Caco-2 (cell line): ENCODE measurements at regions of chr20 and their contacts with region 1.

Region 1: GRCh38 chr20:31723319-31724078 is 831 bp upstream of the BCL2L1 start:
- DNase-seq: peak; percentile 100
- H3K4me3 ChIP-seq: peak overlapping the region; percentile 75
- H3K4me3 Mint-ChIP-seq: peak overlapping the region; percentile 96
- H3K27ac Mint-ChIP-seq: peak overlapping the region; percentile 97
- H3K4me1 ChIP-seq: peaks cover 12% of the 10 kb centered on the region
- H3K4me1 Mint-ChIP-seq: peaks cover 19% of the 10 kb centered on the region
- H3K27me3 ChIP-seq: no peaks in the 10 kb centered on the region
- H3K27me3 Mint-ChIP-seq: no peaks in the 10 kb centered on the region
- CTCF ChIP-seq: peak; percentile 99 to 100

Region 2: DNA sequence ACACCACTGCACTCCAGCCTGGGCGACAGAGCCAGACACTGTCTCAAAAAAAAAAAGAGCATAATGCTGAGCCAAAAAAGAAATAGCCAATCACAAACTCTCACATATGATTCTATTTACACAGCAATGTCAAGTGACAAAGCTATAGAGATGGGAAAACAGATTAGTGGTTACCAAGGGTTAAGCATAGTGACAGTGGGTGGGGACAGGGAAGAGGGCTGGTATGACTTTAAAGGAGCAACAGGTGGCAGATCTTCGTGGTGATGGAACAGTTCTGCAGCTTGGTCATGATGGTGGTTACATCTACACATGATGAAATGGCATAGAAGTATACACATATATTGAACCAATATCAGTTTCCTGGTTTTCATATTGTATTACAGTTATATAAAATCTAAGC is 341.7 kb before region 1 on chr20:
- CTCF ChIA-PET with region 1: no interaction called
- POLR2A ChIA-PET with region 1: no interaction called
- intact Hi-C with region 1: no loop called
- DNase-seq: no peak
- H3K4me3 ChIP-seq: no peak overlapping the region
- H3K4me3 Mint-ChIP-seq: no peak overlapping the region
- H3K27ac Mint-ChIP-seq: no peak overlapping the region
- H3K4me1 ChIP-seq: no peaks in the 10 kb centered on the region
- H3K4me1 Mint-ChIP-seq: no peaks in the 10 kb centered on the region
- H3K27me3 ChIP-seq: peaks cover 2% of the 10 kb centered on the region; the same call in 1 of the 2 replicates
- H3K27me3 Mint-ChIP-seq: peaks cover 23% of the 10 kb centered on the region
- CTCF ChIP-seq: no peak

Region 3: GRCh38 chr20:31572701-31573554 is 150.6 kb before region 1 on chr20:
- CTCF ChIA-PET with region 1: interaction called, 22 read pairs
- POLR2A ChIA-PET with region 1: interaction called, 21 read pairs
- intact Hi-C with region 1: loop called (anchors 1 kb)
- DNase-seq: peak; percentile 100
- H3K4me3 ChIP-seq: peak overlapping the region; percentile 56
- H3K4me3 Mint-ChIP-seq: peak overlapping the region; percentile 87
- H3K27ac Mint-ChIP-seq: peak overlapping the region; percentile 98
- H3K4me1 ChIP-seq: peaks cover 24% of the 10 kb centered on the region
- H3K4me1 Mint-ChIP-seq: peaks cover 37% of the 10 kb centered on the region
- H3K27me3 ChIP-seq: no peaks in the 10 kb centered on the region
- H3K27me3 Mint-ChIP-seq: no peaks in the 10 kb centered on the region
- CTCF ChIP-seq: peak in 1 of 2 experiments; percentile 16

Region 4: GRCh38 chr20:31644701-31645100 is 78.8 kb before region 1 on chr20:
- CTCF ChIA-PET with region 1: interaction called, 13 read pairs
- POLR2A ChIA-PET with region 1: interaction called, 5 read pairs
- intact Hi-C with region 1: no loop called
- DNase-seq: no peak
- H3K4me3 ChIP-seq: no peak overlapping the region
- H3K4me3 Mint-ChIP-seq: no peak overlapping the region
- H3K27ac Mint-ChIP-seq: no peak overlapping the region
- H3K4me1 ChIP-seq: no peaks in the 10 kb centered on the region
- H3K4me1 Mint-ChIP-seq: no peaks in the 10 kb centered on the region
- H3K27me3 ChIP-seq: no peaks in the 10 kb centered on the region
- H3K27me3 Mint-ChIP-seq: no peaks in the 10 kb centered on the region
- CTCF ChIP-seq: no peak

Region 5: DNA sequence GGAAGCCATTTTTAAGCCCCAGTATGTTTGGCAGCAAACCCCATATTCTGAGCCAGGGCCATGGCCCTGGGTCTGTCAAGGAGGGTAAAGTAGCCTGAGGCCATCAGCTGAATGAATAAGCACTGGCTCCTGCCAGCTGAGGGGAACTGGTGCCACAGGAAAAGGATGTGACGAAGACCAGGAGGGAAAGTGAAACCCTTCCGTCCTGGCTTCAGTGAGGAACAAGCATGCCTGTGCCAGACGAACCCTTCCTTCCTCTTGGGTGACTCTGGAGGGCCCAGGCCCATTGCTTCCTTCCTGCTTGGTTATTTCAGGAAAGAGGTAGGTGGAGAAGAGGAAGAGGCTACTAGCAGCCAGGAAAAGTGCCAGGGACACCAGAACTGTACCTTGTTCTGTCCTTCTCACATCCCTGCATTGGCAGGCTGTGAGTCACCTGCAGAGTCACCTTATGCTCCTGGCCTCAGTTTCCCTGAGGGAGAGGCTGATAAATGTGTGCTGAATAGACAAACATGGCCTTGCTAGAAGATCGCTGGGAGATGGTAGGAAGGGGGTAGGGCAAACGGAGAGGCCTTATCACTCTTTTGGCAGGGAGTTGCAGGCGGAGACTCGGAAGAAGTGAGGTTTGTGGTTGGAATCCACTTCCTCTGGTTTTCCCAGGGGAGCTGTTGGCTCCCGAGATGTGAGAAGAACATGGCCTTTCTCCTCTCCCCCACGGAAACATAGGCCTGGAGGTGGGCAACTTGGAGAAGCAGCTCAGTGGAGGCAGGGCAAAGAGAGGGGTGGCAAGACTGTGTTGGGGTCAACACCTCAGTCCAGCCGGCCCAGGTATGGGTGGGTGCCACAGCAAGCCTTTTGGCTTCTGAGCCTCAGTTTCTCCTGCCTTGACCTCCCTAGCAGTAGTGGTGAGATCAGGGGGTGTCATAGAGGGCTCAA is 48.3 kb before region 1 on chr20:
- CTCF ChIA-PET with region 1: interaction called, 78 read pairs
- POLR2A ChIA-PET with region 1: interaction called, 45 read pairs
- intact Hi-C with region 1: loop called (anchors 1 kb)
- DNase-seq: no peak
- H3K4me3 ChIP-seq: no peak overlapping the region
- H3K4me3 Mint-ChIP-seq: peak overlapping the region; percentile 26
- H3K27ac Mint-ChIP-seq: peak overlapping the region; percentile 81
- H3K4me1 ChIP-seq: peaks cover 78% of the 10 kb centered on the region
- H3K4me1 Mint-ChIP-seq: peaks cover 72% of the 10 kb centered on the region
- H3K27me3 ChIP-seq: no peaks in the 10 kb centered on the region
- H3K27me3 Mint-ChIP-seq: no peaks in the 10 kb centered on the region
- CTCF ChIP-seq: no peak

Region 6: GRCh38 chr20:31698803-31699718 is 24.4 kb before region 1 on chr20:
- CTCF ChIA-PET with region 1: interaction called, 72 read pairs
- POLR2A ChIA-PET with region 1: interaction called, 178 read pairs
- intact Hi-C with region 1: loop called (anchors 1 kb)
- DNase-seq: peak in 1 of 2 experiments; percentile 57
- H3K4me3 ChIP-seq: no peak overlapping the region
- H3K4me3 Mint-ChIP-seq: peak overlapping the region; percentile 44
- H3K27ac Mint-ChIP-seq: peak overlapping the region; percentile 89
- H3K4me1 ChIP-seq: peaks cover 94% of the 10 kb centered on the region
- H3K4me1 Mint-ChIP-seq: peaks cover 73% of the 10 kb centered on the region
- H3K27me3 ChIP-seq: no peaks in the 10 kb centered on the region
- H3K27me3 Mint-ChIP-seq: no peaks in the 10 kb centered on the region
- CTCF ChIP-seq: no peak

Region 7: GRCh38 chr20:31738729-31739561 is 15.4 kb after region 1 on chr20 and contains the start of gene TPX2:
- CTCF ChIA-PET with region 1: interaction called, 34 read pairs
- POLR2A ChIA-PET with region 1: interaction called, 15 read pairs
- intact Hi-C with region 1: loop called (anchors 1 kb)
- DNase-seq: peak; percentile 99 to 100
- H3K4me3 ChIP-seq: peak within 1 kb of the TSS; percentile 72
- H3K4me3 Mint-ChIP-seq: no peak within 1 kb of the TSS
- H3K27ac Mint-ChIP-seq: no peak within 1 kb of the TSS
- H3K4me1 ChIP-seq: 0 out of 2 replicates have a peak, but pooled peaks cover 6% of the 10 kb centered on the region
- H3K4me1 Mint-ChIP-seq: no peaks in the 10 kb centered on the region
- H3K27me3 ChIP-seq: no peaks in the 10 kb centered on the region
- H3K27me3 Mint-ChIP-seq: no peaks in the 10 kb centered on the region
- CTCF ChIP-seq: peak in 1 of 2 experiments; percentile 66
- total RNA-seq, gene TPX2: 221 and 237 TPM in 2 replicates

Region 8: DNA sequence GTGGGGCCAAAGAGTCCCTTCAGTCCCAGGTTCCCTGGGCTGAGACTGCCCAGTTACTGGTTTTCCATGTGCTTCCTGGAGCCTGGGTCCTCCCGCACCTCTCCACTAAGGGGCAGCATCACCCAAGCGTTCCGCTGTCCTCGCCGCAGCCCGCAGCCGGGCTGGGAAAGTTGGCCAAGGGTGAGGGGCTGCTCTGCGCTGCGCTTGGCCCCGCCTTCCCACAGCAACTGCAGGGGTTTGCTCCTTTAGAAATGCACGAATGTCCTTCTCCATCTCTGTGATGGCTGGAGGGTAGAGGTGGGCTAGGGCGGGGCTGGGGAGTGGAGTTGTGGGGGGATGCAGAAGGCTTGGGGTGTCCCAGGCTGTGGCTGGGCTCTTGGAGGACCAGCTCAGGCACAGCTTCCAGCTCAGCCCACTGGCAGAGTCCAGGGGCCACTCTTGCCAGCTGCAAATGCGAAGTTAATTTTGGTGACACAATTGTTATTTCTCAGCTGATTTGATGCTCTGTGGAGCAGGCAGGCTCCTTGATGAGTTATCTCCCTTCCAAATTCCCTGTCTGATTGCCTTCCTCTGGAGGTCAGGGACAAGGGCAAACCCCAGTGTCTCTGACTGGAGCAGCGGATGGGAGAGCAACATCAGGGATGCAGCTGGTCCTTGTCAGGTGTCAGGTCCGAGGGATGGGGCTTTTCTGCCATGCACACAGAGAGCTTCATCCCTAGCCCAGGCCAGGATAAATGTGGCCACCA is 798.5 kb after region 1 on chr20:
- CTCF ChIA-PET with region 1: no interaction called
- POLR2A ChIA-PET with region 1: no interaction called
- intact Hi-C with region 1: no loop called
- DNase-seq: peak; percentile 87 to 94
- H3K4me3 ChIP-seq: no peak overlapping the region
- H3K4me3 Mint-ChIP-seq: no peak overlapping the region
- H3K27ac Mint-ChIP-seq: no peak overlapping the region
- H3K4me1 ChIP-seq: no peaks in the 10 kb centered on the region; the same call in 1 of the 2 replicates
- H3K4me1 Mint-ChIP-seq: no peaks in the 10 kb centered on the region
- H3K27me3 ChIP-seq: no peaks in the 10 kb centered on the region
- H3K27me3 Mint-ChIP-seq: no peaks in the 10 kb centered on the region
- CTCF ChIP-seq: peak; percentile 98 to 99